ENCODE measurements at regions of chr4 and their contacts with region 1.

Region 1: DNA sequence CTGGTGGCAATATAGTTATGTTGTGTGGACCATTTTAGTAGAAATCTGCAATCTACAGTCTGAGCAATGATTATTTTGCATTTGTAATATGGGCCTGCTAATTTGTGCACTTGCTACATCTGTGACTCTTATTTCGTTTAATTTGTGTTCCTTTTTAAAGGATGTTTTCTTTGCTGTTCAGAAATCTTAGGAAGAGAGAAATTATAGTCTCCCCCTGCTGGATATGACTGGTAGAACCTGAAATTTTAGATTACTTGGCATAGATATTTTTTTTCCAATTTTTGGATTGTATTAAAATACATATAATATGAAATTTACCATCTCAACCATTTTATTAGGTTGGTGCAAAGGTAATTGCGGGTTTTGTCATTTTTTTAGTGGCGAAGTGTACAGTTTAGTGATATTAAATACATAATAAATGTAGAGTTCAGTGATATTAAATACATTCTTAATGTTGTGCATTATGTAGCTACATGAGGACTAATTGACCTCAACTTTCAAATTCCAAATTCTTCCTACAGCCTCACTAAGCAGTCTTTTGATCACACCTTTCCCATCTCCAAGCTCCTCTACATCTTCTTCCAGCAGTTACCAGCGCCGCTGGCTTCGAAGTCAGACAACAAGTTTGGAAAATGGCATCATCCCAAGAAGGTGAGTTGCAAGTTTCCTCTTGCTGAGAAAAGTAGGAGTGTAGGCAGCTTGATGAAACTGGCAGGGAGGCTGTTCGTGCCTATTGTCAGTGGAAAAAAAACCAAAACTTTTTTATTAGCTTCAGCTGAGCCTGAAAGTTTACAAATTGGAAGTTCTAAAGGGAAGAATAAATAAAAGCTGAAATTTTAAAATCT is 82.2 kb downstream of the FNIP2 start:
- DNase-seq: peak; percentile 50 to 71 (median 61)
- H3K4me3 ChIP-seq: no peak overlapping the region
- H3K27ac ChIP-seq: no peak overlapping the region
- H3K4me1 ChIP-seq: peaks cover 0 to 4% (median 0%) of the 10 kb centered on the region in 4 experiments
- H3K27me3 ChIP-seq: no peaks in the 10 kb centered on the region

Region 2: DNA sequence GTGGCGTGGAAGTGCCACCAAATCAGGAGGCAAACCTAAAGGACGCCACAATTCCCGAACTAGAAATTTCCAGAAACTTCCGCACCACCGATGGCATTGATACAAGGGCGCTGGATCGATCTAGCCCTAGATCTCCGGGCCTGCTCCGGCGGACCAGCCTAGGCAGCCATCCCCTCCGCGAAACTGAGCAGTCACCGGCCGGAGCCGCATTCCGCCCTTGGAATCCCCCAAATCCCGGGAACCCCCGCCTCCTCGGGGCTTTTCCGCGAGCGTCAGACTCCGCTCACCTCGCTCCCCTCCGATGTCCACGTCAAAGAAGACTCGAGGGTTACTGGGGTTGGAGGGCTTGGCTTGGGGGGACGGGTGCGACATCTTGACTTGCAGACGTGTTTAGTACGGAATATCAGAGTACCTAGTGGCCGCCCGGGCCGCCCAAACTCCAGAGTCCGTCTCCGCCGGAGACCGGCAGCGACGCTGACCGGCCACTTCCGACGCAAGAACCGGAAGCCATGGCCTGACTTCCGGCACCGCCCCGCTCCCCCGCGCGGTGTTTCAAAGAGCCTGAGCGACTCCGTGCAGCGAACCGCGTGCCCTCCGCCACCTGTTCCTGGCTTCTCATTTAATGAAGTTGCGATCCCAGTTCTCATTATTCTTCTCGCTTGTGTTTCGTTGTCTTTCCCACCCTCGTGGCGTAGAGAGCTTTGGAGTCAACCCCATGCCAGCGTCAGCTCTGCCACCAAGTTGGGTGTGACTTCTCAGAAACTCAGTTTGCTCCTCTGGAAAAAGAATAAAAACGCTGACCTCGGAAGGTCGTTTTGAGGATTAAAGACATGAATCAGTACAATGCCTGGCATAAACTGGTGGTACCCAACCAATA is 127.9 kb before region 1 on chr4 and contains the start of gene PPID:
- CTCF ChIA-PET with region 1: interaction called, 26 read pairs
- POLR2A ChIA-PET with region 1: no interaction called
- DNase-seq: peak; percentile 66 to 89 (median 86)
- H3K4me3 ChIP-seq: peak within 1 kb of the TSS; percentile 83 to 97 (median 93)
- H3K27ac ChIP-seq: peak within 1 kb of the TSS; percentile 76 to 91
- H3K4me1 ChIP-seq: peaks cover 4 to 15% (median 8%) of the 10 kb centered on the region in 4 experiments
- H3K27me3 ChIP-seq: no peaks in the 10 kb centered on the region

Region 3: DNA sequence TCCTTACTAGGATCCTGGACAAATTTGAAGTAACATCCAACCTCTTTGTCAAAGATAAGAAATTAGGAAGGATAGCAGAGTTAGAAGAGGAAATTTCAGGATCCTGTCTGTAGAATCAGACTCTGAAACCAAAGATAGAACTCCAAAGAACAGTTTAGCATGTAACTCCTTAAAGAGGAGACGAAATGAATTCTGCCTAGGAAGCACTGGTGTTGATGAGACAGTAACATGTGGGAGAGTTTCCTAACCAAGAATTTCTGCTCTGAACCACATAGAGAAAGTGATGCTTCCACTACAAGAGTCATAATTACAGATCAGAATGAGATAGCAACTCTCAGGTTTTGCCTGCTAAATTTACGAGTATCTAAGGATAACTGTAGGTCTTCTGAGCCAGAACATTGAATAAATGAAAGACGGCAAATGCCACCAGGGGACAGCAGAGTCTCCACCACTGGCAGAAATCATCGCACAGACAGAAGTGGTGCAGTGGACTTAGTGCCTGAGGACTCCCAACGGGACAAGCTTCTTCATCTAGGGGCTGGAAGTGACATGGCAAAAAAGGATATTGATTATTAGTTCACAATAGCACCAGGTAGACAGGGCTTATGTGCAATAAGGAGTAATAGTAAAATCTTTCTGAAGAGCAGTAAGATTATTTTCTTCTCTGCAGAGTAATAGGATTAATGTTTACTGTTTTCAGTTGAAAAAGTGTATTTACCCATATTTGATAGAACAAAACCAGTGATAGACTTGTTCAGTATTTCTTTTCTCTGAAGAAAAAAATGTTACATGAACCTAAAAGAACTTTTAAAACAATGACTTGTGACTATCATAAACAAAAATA is 121.1 kb before region 1 on chr4:
- CTCF ChIA-PET with region 1: interaction called, 26 read pairs
- POLR2A ChIA-PET with region 1: interaction called, 3 read pairs
- DNase-seq: peak; percentile 75 to 84 (median 78)
- H3K4me3 ChIP-seq: no peak overlapping the region
- H3K27ac ChIP-seq: no peak overlapping the region
- H3K4me1 ChIP-seq: no peaks in the 10 kb centered on the region
- H3K27me3 ChIP-seq: peaks cover 0 to 2% (median 0%) of the 10 kb centered on the region in 5 experiments

Region 4: DNA sequence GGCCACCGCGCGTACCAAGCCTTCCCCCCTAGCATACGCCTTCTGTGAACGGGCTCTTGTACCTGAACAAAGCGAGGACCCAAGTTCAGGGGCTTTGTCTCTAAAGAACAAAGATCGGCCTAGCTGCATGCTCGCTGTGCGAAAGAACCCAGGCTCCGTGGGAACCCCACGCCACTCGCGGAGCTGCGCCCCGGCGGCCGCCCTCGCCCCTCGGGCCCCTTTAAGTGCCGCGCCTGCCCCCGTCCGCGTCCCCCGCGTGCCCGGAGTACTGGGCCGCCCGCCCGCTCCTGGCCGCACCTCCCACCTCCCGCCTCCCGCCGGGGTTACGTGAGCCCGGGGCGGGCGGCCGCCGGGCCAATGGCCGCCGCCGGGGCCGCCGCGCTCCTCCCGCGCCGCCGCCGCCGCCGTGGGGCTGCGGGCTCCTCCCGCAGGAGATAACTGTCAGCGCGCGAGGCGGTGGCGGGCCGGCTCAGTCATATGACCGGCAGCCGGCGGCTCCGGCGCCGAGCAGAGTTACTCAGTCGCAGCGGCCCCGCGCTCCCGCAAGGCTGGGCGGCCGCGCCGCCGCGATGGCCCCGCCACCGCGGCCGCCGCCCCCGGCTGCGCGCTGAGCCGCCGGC is 82.4 kb before region 1 on chr4 and contains the start of gene FNIP2:
- CTCF ChIA-PET with region 1: interaction called, 17 read pairs
- POLR2A ChIA-PET with region 1: no interaction called
- DNase-seq: peak; percentile 75 to 87 (median 80)
- H3K4me3 ChIP-seq: peak within 1 kb of the TSS; percentile 74 to 93 (median 88)
- H3K27ac ChIP-seq: peak within 1 kb of the TSS; percentile 36 to 79
- H3K4me1 ChIP-seq: peaks cover 10 to 41% (median 28%) of the 10 kb centered on the region in 4 experiments
- H3K27me3 ChIP-seq: no peaks in the 10 kb centered on the region

Region 5: GRCh38 chr4:158782551-158783360 is 68.3 kb before region 1 on chr4:
- CTCF ChIA-PET with region 1: interaction called, 14 read pairs
- POLR2A ChIA-PET with region 1: no interaction called
- DNase-seq: no peak
- H3K4me3 ChIP-seq: no peak overlapping the region
- H3K27ac ChIP-seq: no peak overlapping the region
- H3K4me1 ChIP-seq: peaks cover 25 to 73% (median 65%) of the 10 kb centered on the region in 4 experiments
- H3K27me3 ChIP-seq: no peaks in the 10 kb centered on the region

Region 6: DNA sequence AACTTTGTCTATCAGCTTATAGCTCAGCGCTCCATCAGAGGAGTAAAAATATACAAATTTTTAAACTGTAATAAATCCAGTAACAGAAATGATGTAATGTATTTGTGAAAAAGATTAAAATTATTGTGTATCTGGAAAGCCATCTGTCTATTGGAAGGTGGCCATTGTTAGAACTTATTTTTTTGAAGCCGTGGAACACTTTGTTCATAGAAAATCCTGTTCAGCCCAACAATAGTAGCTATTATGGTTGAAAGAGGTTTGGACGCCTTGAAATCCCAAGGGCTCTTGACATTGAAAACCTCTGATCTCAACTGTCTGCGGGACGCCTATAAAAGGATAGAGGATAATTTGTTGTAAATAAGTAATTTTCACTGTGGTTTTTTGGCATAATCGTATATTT is 350.1 kb after region 1 on chr4:
- CTCF ChIA-PET with region 1: interaction called, 71 read pairs
- POLR2A ChIA-PET with region 1: no interaction called
- DNase-seq: no peak
- H3K4me3 ChIP-seq: no peak overlapping the region
- H3K27ac ChIP-seq: peak overlapping the region in 1 of 2 experiments; percentile 10
- H3K4me1 ChIP-seq: peaks cover 3 to 68% (median 29%) of the 10 kb centered on the region in 4 experiments
- H3K27me3 ChIP-seq: no peaks in the 10 kb centered on the region

Region 7: GRCh38 chr4:159206427-159206871 is 355.4 kb after region 1 on chr4:
- CTCF ChIA-PET with region 1: interaction called, 71 read pairs
- POLR2A ChIA-PET with region 1: no interaction called
- DNase-seq: peak; percentile 67 to 95 (median 93)
- H3K4me3 ChIP-seq: peak overlapping the region in 5 of 7 experiments; percentile 24 to 69 (median 30)
- H3K27ac ChIP-seq: peak overlapping the region in 1 of 2 experiments; percentile 27
- H3K4me1 ChIP-seq: peaks cover 15 to 59% (median 29%) of the 10 kb centered on the region in 4 experiments
- H3K27me3 ChIP-seq: no peaks in the 10 kb centered on the region

Measured in common myeloid progenitor, CD34-positive (primary cell).